Ovary (tissue), 10 donors: ENCODE measurements at regions of chr4 and their contacts with region 1.

Region 1: DNA sequence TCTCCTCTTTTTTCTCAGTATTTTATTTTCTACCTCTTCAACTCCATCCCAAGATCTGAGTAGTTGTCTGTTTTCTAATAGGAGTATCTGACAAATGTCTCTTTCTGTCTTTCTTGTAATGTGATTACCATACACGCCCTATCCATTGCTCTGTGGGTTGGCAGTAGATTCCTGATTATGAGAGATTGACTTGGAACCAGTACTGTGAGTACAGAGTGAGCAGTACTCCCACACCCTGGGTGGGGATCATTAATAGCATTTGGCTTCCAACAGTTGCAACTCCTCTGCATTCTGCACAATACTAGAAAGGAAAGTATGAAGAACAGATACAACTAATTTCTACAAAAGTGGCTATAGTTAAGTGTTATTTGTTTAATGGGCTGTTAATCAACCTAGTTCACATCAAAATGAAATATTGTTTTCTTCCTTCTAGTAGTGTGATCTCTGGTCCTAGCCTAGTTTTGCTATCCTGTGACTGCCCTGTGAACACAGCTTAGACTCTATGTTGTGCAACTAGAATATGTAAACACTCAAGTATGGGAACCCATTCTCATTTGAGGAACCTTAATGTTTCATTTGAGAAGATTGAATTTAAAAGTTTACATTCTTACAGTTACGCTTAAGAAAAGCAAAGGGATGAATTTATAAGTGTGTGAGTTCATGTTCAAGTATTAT is 112.9 kb downstream of the PTPN13 start:
- DNase-seq: no peak
- H3K4me3 ChIP-seq: no peak overlapping the region
- H3K27ac ChIP-seq: no peak overlapping the region
- H3K4me1 ChIP-seq: no peaks in the 10 kb centered on the region
- H3K27me3 ChIP-seq: no peaks in the 10 kb centered on the region
- CTCF ChIP-seq: no peak
- EP300 ChIP-seq: no peak
- POLR2A ChIP-seq: no peak

Region 2: DNA sequence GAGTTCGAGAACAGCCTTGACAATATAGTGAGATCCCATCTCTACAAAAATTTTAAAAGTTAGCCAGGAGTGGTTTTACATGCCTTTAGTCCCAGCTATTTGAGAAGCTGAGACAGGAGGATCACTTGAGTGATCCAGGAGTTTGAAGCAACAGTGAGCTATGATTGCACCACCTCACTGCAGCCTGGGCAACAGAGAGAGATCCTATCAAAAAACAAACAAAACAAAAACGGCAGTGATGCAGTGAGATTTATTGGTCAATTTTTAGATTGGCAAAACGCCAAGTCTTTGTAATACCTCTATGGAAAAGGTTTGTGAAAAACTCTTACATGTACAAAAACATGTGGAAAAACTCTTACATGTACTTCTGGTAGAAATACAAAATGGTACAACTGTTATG is 21.7 kb before region 1 on chr4:
- intact Hi-C with region 1: loop called in 1 of 4 experiments (anchors 1 kb)
- DNase-seq: no peak
- H3K4me3 ChIP-seq: no peak overlapping the region
- H3K27ac ChIP-seq: no peak overlapping the region
- H3K4me1 ChIP-seq: no peaks in the 10 kb centered on the region
- H3K27me3 ChIP-seq: no peaks in the 10 kb centered on the region
- CTCF ChIP-seq: no peak
- EP300 ChIP-seq: no peak
- POLR2A ChIP-seq: no peak